ENCODE measurements at regions of chr1 and their contacts with region 1.

Region 1: DNA sequence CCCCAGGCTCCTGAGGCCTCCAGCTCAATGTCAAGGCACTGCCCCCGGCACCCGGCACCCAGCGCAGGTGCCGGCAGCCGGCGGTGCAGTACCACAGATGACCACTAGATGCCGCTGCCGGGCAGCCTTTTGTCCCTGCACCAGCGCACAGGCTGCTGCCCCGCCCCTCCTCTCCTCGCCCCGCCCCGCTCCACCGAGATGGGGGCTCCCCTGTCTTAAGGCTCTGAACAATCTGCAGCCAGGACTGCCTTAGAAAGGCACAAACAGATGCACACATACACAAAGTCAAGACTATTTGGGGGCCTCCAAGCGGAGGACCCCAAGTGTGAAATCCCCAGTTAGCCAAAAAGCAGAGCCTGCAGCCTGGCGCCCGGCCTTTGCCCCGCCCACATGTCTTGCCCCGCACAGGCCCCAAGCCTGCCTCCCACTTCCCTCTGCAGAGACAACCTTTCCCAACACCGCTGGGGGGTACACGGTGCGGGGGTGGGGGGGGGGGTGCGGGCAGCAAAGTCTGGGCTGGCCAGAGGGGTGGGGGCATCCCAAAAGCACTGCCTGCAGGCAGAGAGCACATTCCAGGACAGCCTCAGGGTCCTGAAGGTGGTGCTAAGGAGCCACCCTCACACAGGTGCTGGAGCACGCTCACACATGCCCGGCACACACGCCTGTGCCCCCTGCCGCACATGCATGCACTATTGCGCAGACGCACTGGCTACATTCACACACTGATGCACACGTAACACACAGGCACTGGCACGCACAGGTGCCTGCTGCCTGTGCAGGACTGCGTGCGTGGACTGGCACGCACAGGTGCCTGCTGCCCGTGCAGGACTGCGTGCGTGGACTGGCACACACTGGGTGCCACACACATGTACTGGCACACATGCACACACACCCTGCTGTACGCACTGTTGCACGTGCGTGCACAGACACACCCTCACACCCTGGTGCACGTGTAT is 37.1 kb downstream of the ARHGEF16 start:
- DNase-seq: peak; percentile 89
- ATAC-seq: peak; percentile 98
- H3K4me3 Mint-ChIP-seq: peak overlapping the region; percentile 66
- H3K27ac Mint-ChIP-seq: no peak overlapping the region
- H3K4me1 Mint-ChIP-seq: peaks cover 6% of the 10 kb centered on the region
- H3K27me3 Mint-ChIP-seq: no peaks in the 10 kb centered on the region
- CTCF ChIP-seq: peak; percentile 93

Region 2: GRCh38 chr1:2412519-2413233 is 1078.9 kb before region 1 on chr1 and contains the start of gene PEX10:
- CTCF ChIA-PET with region 1: no interaction called
- POLR2A ChIA-PET with region 1: no interaction called
- intact Hi-C with region 1: loop called (anchors 5 kb)
- DNase-seq: peak; percentile 100
- ATAC-seq: peak; percentile 93
- H3K4me3 Mint-ChIP-seq: peak within 1 kb of the TSS; percentile 83
- H3K27ac Mint-ChIP-seq: peak within 1 kb of the TSS; percentile 71
- H3K4me1 Mint-ChIP-seq: peaks cover 45% of the 10 kb centered on the region
- H3K27me3 Mint-ChIP-seq: no peaks in the 10 kb centered on the region
- CTCF ChIP-seq: no peak
- total RNA-seq, gene PEX10: 17.4 and 18.9 TPM in 2 replicates

Region 3: GRCh38 chr1:3453203-3453761 is 38.3 kb before region 1 on chr1:
- CTCF ChIA-PET with region 1: interaction called, 11 read pairs
- POLR2A ChIA-PET with region 1: no interaction called
- intact Hi-C with region 1: no loop called
- DNase-seq: peak; percentile 73
- ATAC-seq: peak; percentile 81
- H3K4me3 Mint-ChIP-seq: peak overlapping the region; percentile 41
- H3K27ac Mint-ChIP-seq: no peak overlapping the region
- H3K4me1 Mint-ChIP-seq: peaks cover 2% of the 10 kb centered on the region
- H3K27me3 Mint-ChIP-seq: peaks cover 19% of the 10 kb centered on the region
- CTCF ChIP-seq: peak; percentile 46

Region 4: DNA sequence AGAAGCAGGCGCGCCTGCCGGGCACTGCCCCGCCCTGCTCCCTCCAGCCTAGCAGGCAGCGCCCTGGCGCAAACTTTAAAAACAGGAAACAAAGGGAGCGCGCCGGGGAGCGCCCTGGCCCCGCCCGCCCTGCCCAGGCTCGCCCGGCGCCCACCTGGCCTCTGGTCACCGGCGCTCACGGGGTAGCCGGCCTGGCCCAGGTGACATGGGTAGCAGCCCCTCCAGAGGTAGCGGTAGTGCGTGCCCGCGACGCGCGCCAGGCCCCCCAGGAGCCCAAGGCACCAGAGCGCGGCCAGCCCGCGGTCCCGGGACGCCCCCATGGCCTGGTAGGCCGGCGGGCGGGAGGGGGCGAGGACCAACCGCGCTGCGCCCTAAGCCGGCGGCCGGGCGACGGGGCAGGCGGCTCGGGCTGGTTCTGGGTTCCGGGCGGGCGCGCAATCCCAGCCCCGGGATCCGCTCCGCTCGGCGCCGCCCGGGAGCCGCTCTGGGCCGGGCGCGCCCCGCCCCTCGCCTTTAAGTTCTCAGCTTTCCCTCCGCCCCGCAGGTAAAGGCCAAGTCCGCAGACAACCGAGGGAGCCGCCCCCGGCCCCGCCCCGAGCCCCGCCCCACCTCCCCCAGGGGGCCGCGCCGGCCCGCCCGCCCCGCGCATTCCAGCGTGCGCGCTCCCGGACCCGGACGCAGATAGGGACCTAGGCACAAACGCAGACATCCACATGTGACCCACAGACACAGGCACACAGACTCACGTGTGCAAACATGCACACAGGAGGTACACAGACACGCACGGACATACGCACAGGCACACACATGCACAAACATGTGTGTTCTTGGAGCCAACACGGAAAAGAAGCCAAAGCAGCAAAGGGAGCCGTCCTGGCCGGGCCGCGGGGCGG is 39.6 kb after region 1 on chr1:
- CTCF ChIA-PET with region 1: no interaction called
- POLR2A ChIA-PET with region 1: no interaction called
- intact Hi-C with region 1: loop called (anchors 1 kb)
- DNase-seq: peak; percentile 63
- ATAC-seq: peak; percentile 84
- H3K4me3 Mint-ChIP-seq: peak overlapping the region; percentile 76
- H3K27ac Mint-ChIP-seq: peak overlapping the region; percentile 65
- H3K4me1 Mint-ChIP-seq: peaks cover 15% of the 10 kb centered on the region
- H3K27me3 Mint-ChIP-seq: no peaks in the 10 kb centered on the region
- CTCF ChIP-seq: no peak

Region 5: GRCh38 chr1:3618881-3619671 is 127.5 kb after region 1 on chr1:
- CTCF ChIA-PET with region 1: interaction called, 21 read pairs
- POLR2A ChIA-PET with region 1: no interaction called
- intact Hi-C with region 1: loop called (anchors 1 kb)
- DNase-seq: peak; percentile 51
- ATAC-seq: peak; percentile 96
- H3K4me3 Mint-ChIP-seq: peak overlapping the region; percentile 73
- H3K27ac Mint-ChIP-seq: no peak overlapping the region
- H3K4me1 Mint-ChIP-seq: peaks cover 38% of the 10 kb centered on the region
- H3K27me3 Mint-ChIP-seq: peaks cover under 1% of the 10 kb centered on the region
- CTCF ChIP-seq: no peak

Region 6: DNA sequence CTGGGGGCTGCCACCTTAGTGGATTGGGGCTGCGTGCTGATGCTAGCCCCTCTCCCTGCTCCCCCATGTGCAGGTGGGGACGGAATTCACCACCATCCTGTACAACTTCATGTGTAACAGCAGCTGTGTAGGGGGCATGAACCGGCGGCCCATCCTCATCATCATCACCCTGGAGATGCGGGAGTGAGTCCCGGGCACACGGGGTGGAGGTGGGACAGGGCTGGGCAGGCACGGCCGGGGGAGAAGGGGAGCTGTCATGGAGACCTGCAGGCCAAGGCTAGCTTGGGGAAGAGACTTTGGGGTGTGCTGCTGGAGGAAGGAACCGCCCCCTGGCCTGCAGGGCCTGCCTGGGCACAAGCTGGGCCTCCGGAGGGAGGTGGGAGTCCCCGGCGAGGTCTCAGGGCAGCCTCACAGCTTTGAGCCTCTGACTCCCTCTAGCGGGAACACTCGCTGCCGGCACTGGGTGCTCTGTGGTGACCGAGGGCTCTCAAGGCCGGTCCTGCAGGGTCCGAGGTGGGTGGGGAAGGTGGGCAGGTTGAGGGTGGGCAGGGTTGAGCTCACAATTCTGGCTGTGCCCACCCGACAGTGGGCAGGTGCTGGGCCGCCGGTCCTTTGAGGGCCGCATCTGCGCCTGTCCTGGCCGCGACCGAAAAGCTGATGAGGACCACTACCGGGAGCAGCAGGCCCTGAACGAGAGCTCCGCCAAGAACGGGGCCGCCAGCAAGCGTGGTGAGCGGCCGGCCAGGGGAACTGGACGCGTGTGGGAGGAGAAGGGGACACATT is 235.7 kb after region 1 on chr1:
- CTCF ChIA-PET with region 1: interaction called, 6 read pairs
- POLR2A ChIA-PET with region 1: no interaction called
- intact Hi-C with region 1: loop called (anchors 1 kb)
- DNase-seq: no peak
- ATAC-seq: peak; percentile 64
- H3K4me3 Mint-ChIP-seq: no peak overlapping the region
- H3K27ac Mint-ChIP-seq: no peak overlapping the region
- H3K4me1 Mint-ChIP-seq: peaks cover 4% of the 10 kb centered on the region
- H3K27me3 Mint-ChIP-seq: peaks cover 4% of the 10 kb centered on the region
- CTCF ChIP-seq: no peak

Measured in activated B cell treated with CpG ODN at 0.5 μM for 24 hours (primary cell).